ENCODE measurements at regions of chr12 and their contacts with region 1.

Region 1: GRCh38 chr12:90085494-90086274 is 377.0 kb upstream of the ATP2B1 start:
- DNase-seq: no peak
- CTCF ChIP-seq: no peak

Region 2: GRCh38 chr12:90102957-90103652 is 17.4 kb after region 1 on chr12:
- CTCF ChIA-PET with region 1: interaction called, 17 read pairs
- POLR2A ChIA-PET with region 1: no interaction called
- DNase-seq: peak; percentile 20
- CTCF ChIP-seq: peak; percentile 64